ENCODE measurements at regions of chr10 and their contacts with region 1.

Region 1: GRCh38 chr10:97686962-97687784 is at the start of gene AVPI1:
- DNase-seq: peak; percentile 98
- ATAC-seq: peak; percentile 94
- H3K4me3 ChIP-seq: peak within 1 kb of the TSS; percentile 34 to 80 (median 76)
- H3K4me3 Mint-ChIP-seq: peak within 1 kb of the TSS; percentile 90
- H3K27ac ChIP-seq: peak within 1 kb of the TSS; percentile 71 to 73
- H3K27ac Mint-ChIP-seq: peak within 1 kb of the TSS; percentile 79
- H3K4me1 ChIP-seq: peaks cover 4 to 15% of the 10 kb centered on the region in 2 donors
- H3K4me1 Mint-ChIP-seq: peaks cover 14% of the 10 kb centered on the region
- H3K27me3 ChIP-seq: peaks cover 0 to 5% (median 0%) of the 10 kb centered on the region in 4 experiments
- H3K27me3 Mint-ChIP-seq: no peaks in the 10 kb centered on the region
- CTCF ChIP-seq: no peak
- total RNA-seq, gene AVPI1: 3.4 and 3.9 TPM in 2 replicates

Region 2: DNA sequence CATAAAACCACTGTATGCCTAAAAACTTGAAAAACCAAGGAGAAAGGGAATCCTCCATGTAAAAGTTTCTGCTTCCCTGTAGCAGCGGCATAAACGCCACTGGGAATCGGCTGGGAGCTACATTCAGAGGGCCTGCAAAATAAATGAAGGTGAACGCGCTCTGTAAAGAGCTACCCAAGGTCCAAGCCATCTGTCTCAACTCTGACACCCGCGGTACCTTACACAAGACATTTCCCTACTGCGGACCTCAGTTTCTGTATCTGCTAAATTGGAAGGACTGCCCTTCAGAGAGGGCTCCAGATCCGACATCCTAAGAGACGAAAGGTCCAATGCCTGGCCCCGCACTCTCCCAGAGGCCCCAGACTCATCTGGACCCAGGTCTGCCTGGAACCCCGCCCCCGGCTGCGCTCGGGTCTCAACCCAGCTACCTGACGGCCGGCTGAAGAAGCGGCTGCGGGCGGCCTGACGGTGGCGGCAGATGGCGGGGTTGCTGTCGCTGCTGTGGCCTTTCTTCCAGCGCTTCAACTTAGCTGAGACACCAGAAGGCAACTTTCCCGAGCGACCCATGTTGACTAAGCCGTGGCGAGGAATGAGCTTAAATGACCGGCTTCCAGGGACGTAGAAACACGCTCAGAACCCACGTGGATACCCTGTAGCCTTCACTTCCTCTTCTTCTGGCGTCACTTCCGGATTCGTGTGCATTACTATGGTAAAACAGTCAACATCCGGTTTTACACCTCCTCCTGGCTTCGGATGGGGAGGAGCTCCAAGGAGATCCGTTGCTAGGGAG is 286.3 kb before region 1 on chr10 and contains the start of gene RRP12:
- CTCF ChIA-PET with region 1: no interaction called
- POLR2A ChIA-PET with region 1: no interaction called
- intact Hi-C with region 1: loop called (anchors 1 kb)
- DNase-seq: peak; percentile 97
- ATAC-seq: peak; percentile 88
- H3K4me3 ChIP-seq: peak within 1 kb of the TSS; percentile 68 to 98 (median 81)
- H3K4me3 Mint-ChIP-seq: peak within 1 kb of the TSS; percentile 98
- H3K27ac ChIP-seq: peak within 1 kb of the TSS; percentile 90 to 94
- H3K27ac Mint-ChIP-seq: peak within 1 kb of the TSS; percentile 97
- H3K4me1 ChIP-seq: peaks cover 12 to 19% of the 10 kb centered on the region in 2 donors
- H3K4me1 Mint-ChIP-seq: peaks cover 15% of the 10 kb centered on the region
- H3K27me3 ChIP-seq: no peaks in the 10 kb centered on the region
- H3K27me3 Mint-ChIP-seq: no peaks in the 10 kb centered on the region
- CTCF ChIP-seq: no peak
- total RNA-seq, gene RRP12: 33.6 and 35.7 TPM in 2 replicates

Region 3: DNA sequence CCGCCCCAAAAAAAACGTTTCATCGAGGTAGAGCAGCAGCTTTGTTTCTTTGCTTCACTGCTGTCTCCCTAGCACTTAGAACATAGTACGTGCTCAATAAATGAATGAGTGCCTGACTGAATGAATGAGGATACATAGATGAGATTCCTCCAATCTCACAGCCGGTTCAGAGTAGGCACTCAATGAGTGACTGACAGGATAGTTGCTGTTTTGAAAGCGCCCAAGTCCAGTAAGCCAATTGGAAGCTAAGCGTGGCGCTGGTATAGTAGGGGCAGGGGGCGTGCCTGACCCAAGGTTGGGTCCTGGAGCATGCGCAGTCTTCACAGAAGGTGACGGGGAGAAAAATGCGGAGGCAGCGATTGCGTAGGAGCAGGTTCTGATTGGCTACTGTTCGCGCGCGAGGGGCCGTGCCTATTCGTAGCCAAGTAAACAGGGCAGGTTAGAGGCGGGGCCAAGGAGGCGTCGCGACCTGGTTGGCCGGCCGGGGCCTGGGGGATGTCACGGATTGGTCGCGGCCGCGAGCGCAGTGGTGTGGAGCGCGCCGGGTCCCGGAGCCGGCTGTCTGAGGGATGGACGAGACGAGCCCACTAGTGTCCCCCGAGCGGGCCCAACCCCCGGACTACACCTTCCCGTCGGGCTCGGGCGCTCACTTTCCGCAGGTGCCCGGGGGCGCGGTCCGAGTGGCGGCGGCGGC is 46.9 kb before region 1 on chr10 and contains the start of gene PI4K2A:
- CTCF ChIA-PET with region 1: interaction called, 3 read pairs
- POLR2A ChIA-PET with region 1: interaction called, 7 read pairs
- intact Hi-C with region 1: loop called (anchors 1 kb)
- DNase-seq: peak; percentile 99
- ATAC-seq: peak; percentile 96
- H3K4me3 ChIP-seq: peak within 1 kb of the TSS; percentile 43 to 84 (median 77)
- H3K4me3 Mint-ChIP-seq: peak within 1 kb of the TSS; percentile 99
- H3K27ac ChIP-seq: peak within 1 kb of the TSS; percentile 70 to 86
- H3K27ac Mint-ChIP-seq: peak within 1 kb of the TSS; percentile 97
- H3K4me1 ChIP-seq: peaks cover 8 to 18% of the 10 kb centered on the region in 2 donors
- H3K4me1 Mint-ChIP-seq: peaks cover 22% of the 10 kb centered on the region
- H3K27me3 ChIP-seq: no peaks in the 10 kb centered on the region
- H3K27me3 Mint-ChIP-seq: no peaks in the 10 kb centered on the region
- CTCF ChIP-seq: no peak
- total RNA-seq, gene PI4K2A: 17.7 and 18.4 TPM in 2 replicates

Region 4: DNA sequence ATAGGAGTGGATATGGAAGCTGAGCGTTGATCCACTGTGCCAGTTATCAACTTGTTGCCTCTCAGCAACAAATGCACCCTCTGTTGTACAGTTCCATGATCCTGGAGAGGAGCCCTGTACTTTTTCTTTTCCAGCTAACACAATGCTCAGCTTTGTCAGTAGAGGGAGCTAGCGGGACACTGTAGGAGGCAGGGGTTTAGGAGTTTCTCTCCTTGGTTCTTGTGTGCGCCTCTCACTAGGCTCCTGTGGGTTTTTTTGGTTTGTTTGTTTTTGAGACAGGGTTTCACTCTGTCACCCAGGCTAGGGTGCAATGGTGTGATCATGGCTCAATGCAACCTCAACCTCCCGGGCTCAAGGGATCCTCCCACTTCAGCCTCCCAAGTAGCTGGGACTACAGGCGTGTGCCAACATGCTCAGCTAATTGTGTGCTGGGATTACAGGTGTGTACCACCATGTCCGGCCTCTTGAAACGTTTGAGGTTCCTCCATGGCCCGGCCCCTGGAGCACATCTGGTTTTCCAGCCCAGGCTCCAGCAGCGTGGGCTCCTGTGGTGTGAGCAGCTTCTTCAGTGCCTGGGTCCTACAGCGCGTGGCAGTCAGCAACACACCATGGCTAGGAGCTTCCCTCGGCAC is 14.4 kb after region 1 on chr10:
- CTCF ChIA-PET with region 1: interaction called, 32 read pairs
- POLR2A ChIA-PET with region 1: no interaction called
- intact Hi-C with region 1: no loop called
- DNase-seq: peak; percentile 66
- ATAC-seq: peak; percentile 75
- H3K4me3 ChIP-seq: no peak overlapping the region
- H3K4me3 Mint-ChIP-seq: no peak overlapping the region
- H3K27ac ChIP-seq: no peak overlapping the region
- H3K27ac Mint-ChIP-seq: no peak overlapping the region
- H3K4me1 ChIP-seq: no peaks in the 10 kb centered on the region
- H3K4me1 Mint-ChIP-seq: no peaks in the 10 kb centered on the region
- H3K27me3 ChIP-seq: peaks cover 0 to 9% (median 2%) of the 10 kb centered on the region in 4 experiments
- H3K27me3 Mint-ChIP-seq: peaks cover 11% of the 10 kb centered on the region
- CTCF ChIP-seq: peak; percentile 78

Region 5: DNA sequence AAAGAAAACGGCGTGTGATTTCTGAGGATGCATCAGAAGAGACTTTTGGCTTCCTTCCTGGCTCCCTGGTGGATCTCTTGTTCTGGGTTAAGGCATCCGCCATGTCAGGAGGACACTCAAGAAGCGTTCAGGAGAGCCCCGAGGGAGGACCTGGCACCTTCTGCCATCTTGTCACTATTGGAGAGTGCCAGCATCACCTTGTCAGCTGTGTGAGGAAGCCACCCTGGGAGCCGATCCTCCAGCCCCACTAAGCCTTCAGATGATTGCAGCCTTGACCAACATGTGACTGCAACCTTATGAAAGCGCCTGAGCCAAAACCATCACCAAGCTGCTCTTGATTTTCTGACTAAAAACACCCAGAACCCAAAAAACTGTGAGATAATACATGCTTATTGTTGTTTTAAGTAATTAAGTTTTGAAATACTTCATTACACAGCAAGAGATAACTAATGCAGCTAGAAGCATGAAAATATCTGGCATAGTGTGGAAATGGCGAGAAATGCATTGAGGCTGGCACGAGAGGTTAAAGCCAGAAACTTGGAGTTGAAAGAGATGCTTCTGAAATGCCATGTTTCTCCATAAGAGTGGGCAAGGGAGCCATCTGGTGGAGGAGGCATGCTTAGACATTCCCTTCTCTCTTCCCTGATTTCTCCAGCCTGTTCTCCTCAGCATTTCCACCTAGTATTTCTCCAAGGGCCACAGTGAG is 44.3 kb after region 1 on chr10:
- CTCF ChIA-PET with region 1: interaction called, 267 read pairs
- POLR2A ChIA-PET with region 1: interaction called, 17 read pairs
- intact Hi-C with region 1: loop called (anchors 1 kb)
- DNase-seq: peak; percentile 76
- ATAC-seq: peak; percentile 70
- H3K4me3 ChIP-seq: no peak overlapping the region
- H3K4me3 Mint-ChIP-seq: no peak overlapping the region
- H3K27ac ChIP-seq: no peak overlapping the region
- H3K27ac Mint-ChIP-seq: peak overlapping the region; percentile 55
- H3K4me1 ChIP-seq: peaks cover 5 to 6% of the 10 kb centered on the region in 2 donors
- H3K4me1 Mint-ChIP-seq: peaks cover 10% of the 10 kb centered on the region
- H3K27me3 ChIP-seq: peaks cover 0 to 3% (median 0%) of the 10 kb centered on the region in 4 experiments
- H3K27me3 Mint-ChIP-seq: peaks cover 4% of the 10 kb centered on the region
- CTCF ChIP-seq: peak; percentile 82

Region 6: GRCh38 chr10:98045785-98046389 is 358.7 kb after region 1 on chr10:
- CTCF ChIA-PET with region 1: interaction called, 14 read pairs
- POLR2A ChIA-PET with region 1: no interaction called
- intact Hi-C with region 1: loop called (anchors 5 kb)
- DNase-seq: peak; percentile 70
- ATAC-seq: peak; percentile 56
- H3K4me3 ChIP-seq: no peak overlapping the region
- H3K4me3 Mint-ChIP-seq: no peak overlapping the region
- H3K27ac ChIP-seq: no peak overlapping the region
- H3K27ac Mint-ChIP-seq: no peak overlapping the region
- H3K4me1 ChIP-seq: no peaks in the 10 kb centered on the region
- H3K4me1 Mint-ChIP-seq: no peaks in the 10 kb centered on the region
- H3K27me3 ChIP-seq: peaks cover 0 to 29% (median 15%) of the 10 kb centered on the region in 4 experiments
- H3K27me3 Mint-ChIP-seq: peaks cover 48% of the 10 kb centered on the region
- CTCF ChIP-seq: peak; percentile 96